OCI-LY7 (cell line): ENCODE measurements at regions of chr20 and their contacts with region 1.

Region 1: DNA sequence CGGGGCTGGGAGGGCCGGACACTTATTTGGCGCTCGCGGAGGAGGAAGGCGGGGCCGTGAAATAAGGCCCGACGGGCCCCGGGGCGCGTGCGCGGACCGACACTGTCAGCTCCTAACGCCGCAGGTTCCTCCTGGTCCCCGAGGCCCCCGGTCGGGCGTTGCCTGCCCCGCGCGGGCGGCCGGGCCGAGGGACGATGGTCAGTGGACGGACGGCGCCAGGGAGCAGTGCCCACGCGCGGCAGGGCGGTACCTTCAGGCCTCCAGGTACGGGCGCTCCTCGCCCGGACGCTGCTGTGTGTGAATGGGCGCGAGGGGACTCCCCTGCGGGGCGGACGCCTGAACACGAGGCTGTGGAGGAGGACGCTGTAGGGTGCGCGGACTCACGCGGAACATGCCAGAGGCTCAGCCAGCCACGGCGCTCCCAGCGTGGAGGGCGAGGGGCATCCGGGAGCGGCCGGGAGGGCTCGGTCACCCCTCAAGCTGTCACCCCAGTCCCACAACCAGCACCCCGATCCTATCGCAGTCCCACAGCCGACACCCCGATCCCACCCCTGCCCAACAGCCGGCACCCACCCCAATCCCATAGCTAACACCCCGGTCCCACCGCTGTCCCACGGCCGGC is 339 bp upstream of the GMEB2 start:
- DNase-seq: peak; percentile 97
- H3K4me3 ChIP-seq: peak overlapping the region; percentile 96
- H3K27ac ChIP-seq: peak overlapping the region; percentile 48
- H3K4me1 ChIP-seq: peaks cover 15% of the 10 kb centered on the region
- CTCF ChIP-seq: no peak

Region 2: GRCh38 chr20:63553227-63553932 is 73.9 kb before region 1 on chr20:
- CTCF ChIA-PET with region 1: no interaction called
- POLR2A ChIA-PET with region 1: no interaction called
- intact Hi-C with region 1: loop called (anchors 5 kb)
- DNase-seq: peak; percentile 93
- H3K4me3 ChIP-seq: peak overlapping the region; percentile 71
- H3K27ac ChIP-seq: peak overlapping the region; percentile 91
- H3K4me1 ChIP-seq: peaks cover 43% of the 10 kb centered on the region
- CTCF ChIP-seq: no peak

Region 3: DNA sequence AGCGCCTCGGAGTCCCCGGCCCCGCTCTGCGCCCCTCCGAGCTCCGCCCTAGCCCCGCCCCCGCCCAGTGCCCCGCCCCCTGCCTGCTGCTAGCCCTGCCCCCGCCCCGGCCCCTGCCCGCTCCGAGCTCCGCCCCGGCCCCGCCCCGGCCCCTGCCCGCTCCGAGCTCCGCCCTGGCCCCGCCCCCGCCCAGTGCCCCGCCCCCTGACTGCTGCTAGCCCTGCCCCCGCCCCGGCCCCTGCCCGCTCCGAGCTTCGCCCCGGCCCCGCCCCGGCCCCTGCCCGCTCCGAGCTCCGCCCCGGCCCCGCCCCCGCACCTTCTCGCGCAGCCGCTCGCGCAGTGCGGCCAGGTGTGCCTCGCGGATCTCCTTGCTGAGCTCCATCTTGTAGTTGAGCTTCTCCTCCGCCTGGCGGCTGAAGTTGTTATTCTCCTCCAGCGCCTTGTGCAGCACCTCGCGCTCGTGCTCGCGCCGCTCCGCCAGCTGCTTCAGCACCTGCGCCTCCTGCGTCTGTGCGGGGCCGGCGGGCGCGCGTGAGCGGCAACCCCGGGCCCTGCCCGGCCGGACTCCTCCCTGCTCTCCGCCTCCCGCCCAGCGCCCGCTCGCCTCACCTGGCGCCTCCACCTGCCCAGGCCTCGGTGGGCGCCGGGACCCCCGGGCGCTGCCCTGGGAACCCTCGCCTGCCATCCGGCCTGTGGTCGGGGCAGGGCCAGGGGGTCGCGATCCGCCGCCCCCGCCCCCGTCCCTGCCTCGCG is 14.7 kb after region 1 on chr20:
- CTCF ChIA-PET with region 1: interaction called, 6 read pairs
- POLR2A ChIA-PET with region 1: interaction called, 11 read pairs
- intact Hi-C with region 1: loop called (anchors 1 kb)
- DNase-seq: peak; percentile 97
- H3K4me3 ChIP-seq: peak overlapping the region; percentile 74
- H3K27ac ChIP-seq: peak overlapping the region; percentile 72
- H3K4me1 ChIP-seq: peaks cover 30% of the 10 kb centered on the region
- CTCF ChIP-seq: peak; percentile 58

Region 4: GRCh38 chr20:63735859-63736718 is 108.8 kb after region 1 on chr20 and contains the start of gene LIME1:
- CTCF ChIA-PET with region 1: no interaction called
- POLR2A ChIA-PET with region 1: no interaction called
- intact Hi-C with region 1: loop called (anchors 2 kb)
- DNase-seq: peak; percentile 83
- H3K4me3 ChIP-seq: peak within 1 kb of the TSS; percentile 70
- H3K27ac ChIP-seq: peak within 1 kb of the TSS; percentile 89
- H3K4me1 ChIP-seq: peaks cover 69% of the 10 kb centered on the region
- CTCF ChIP-seq: peak; percentile 15; the same call in 1 of the 2 replicates
- total RNA-seq, gene LIME1: 66.3 and 76.4 TPM in 2 replicates

Region 5: GRCh38 chr20:63973636-63974402 is 346.6 kb after region 1 on chr20:
- CTCF ChIA-PET with region 1: no interaction called
- POLR2A ChIA-PET with region 1: no interaction called
- intact Hi-C with region 1: loop called (anchors 10 kb)
- DNase-seq: peak; percentile 81
- H3K4me3 ChIP-seq: no peak overlapping the region
- H3K27ac ChIP-seq: no peak overlapping the region
- H3K4me1 ChIP-seq: peaks cover 32% of the 10 kb centered on the region
- CTCF ChIP-seq: peak; percentile 97